Mammary epithelial cell (primary cell): ENCODE measurements at regions of chr22 and their contacts with region 1.

Region 1: GRCh38 chr22:42614312-42615091 is at the start of gene POLDIP3:
- DNase-seq: peak; percentile 95
- H3K4me3 ChIP-seq: peak within 1 kb of the TSS; percentile 55 to 85 (median 72)
- H3K27ac ChIP-seq: peak within 1 kb of the TSS; percentile 99
- H3K4me1 ChIP-seq: peaks cover 25% of the 10 kb centered on the region
- H3K27me3 ChIP-seq: no peaks in the 10 kb centered on the region
- CTCF ChIP-seq: peak in 1 of 2 donors; percentile 33
- total RNA-seq, gene POLDIP3: 21.5 to 53.6 TPM

Region 2: DNA sequence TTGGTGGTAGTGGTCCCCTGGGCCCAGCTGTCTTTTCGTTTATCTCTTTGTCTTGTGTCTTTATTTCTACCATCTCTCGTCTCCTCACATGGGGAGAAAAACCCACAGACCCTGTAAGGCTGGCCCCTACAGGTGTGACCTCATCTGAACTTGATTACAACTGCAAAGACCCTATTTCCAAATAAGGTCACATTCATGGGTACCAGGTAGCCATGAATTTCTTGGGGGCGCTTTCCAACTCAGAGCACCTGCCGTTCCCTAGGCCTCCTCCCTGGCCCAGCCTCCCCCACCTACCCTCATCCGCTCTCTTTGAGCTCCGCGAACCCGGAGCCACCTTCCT is 80.9 kb before region 1 on chr22:
- CTCF ChIA-PET with region 1: no interaction called
- dilution Hi-C with region 1: no loop called
- in situ Hi-C with region 1: no loop called
- intact Hi-C with region 1: loop called (anchors 2 kb)
- DNase-seq: no peak
- H3K4me3 ChIP-seq: no peak overlapping the region
- H3K27ac ChIP-seq: no peak overlapping the region
- H3K4me1 ChIP-seq: no peaks in the 10 kb centered on the region
- H3K27me3 ChIP-seq: no peaks in the 10 kb centered on the region
- CTCF ChIP-seq: no peak

Region 3: DNA sequence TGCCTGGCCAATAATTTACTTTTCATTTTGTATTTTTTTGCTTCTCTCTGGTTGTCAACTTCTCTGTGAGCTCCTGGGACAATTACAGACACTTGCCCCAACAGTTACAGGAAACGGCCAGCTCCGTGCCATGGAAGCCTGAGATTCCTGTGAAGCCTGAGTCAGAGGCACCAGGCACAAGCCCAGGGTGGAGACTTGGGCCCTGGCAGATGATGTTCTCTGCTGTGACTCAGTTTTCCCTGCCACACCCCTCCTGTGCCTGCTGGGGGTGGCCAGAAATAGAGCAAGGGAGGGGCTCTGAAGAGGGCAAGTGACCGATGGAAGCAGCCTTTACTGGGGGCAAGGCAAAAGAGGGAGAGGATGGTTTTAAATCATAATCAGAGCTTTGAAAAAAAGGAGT is 21.0 kb after region 1 on chr22:
- CTCF ChIA-PET with region 1: no interaction called
- dilution Hi-C with region 1: no loop called
- in situ Hi-C with region 1: no loop called
- intact Hi-C with region 1: loop called (anchors 1 kb)
- DNase-seq: peak; percentile 89
- H3K4me3 ChIP-seq: no peak overlapping the region
- H3K27ac ChIP-seq: peak overlapping the region; percentile 76
- H3K4me1 ChIP-seq: peaks cover 24% of the 10 kb centered on the region
- H3K27me3 ChIP-seq: no peaks in the 10 kb centered on the region
- CTCF ChIP-seq: no peak

Region 4: DNA sequence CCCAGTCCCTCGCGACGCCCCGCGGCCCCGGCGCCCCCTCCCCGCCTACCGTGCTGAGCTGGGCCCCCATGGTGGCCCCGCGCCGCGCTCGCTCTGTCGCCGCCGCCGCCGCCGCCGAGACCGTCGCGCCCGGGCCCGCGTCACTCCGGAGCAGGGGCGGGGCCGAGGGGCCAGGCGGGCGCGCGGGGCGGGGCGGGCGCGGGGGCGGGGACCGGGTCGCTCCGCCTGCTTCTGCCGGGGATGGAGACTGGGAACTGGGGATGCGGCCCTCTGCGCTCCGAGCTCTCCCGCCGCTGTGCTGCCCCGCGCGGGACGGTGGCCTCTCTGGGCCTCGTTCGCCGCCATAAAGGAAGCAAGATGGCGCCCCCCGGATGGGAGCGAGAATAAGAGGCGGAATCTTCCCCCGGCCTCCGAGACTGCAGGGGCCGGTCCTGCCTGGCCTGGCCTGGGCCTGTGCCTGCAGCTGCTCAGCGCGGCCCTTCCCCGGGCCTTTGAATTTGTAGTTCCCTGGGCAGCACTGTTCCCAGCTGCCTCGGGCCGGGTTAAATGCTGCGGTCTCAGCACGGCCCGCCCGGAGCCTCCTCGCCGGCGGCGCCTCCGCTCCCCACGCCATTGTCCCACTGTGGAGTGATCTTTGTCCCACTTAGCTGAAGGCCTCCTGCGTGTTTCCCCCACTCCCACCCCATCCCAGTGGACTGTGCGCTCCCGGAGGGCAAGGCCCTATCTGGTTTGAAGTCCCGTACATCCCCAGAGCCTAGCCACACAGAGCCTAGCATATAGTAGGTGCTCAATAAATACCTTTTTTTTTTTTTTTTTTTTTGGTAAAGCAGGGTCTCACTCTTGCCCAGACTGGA is 35.0 kb after region 1 on chr22 and contains the start of gene CYB5R3:
- CTCF ChIA-PET with region 1: interaction called, 5 read pairs
- dilution Hi-C with region 1: no loop called
- in situ Hi-C with region 1: no loop called
- intact Hi-C with region 1: loop called (anchors 1 kb)
- DNase-seq: peak; percentile 82
- H3K4me3 ChIP-seq: peak within 1 kb of the TSS; percentile 62 to 93 (median 85)
- H3K27ac ChIP-seq: peak within 1 kb of the TSS; percentile 81
- H3K4me1 ChIP-seq: peaks cover 41% of the 10 kb centered on the region
- H3K27me3 ChIP-seq: no peaks in the 10 kb centered on the region
- CTCF ChIP-seq: no peak
- total RNA-seq, gene CYB5R3: 80.4 to 181 TPM